HAP-1 (cell line): ENCODE measurements at regions of chr19 and their contacts with region 1.

Region 1: DNA sequence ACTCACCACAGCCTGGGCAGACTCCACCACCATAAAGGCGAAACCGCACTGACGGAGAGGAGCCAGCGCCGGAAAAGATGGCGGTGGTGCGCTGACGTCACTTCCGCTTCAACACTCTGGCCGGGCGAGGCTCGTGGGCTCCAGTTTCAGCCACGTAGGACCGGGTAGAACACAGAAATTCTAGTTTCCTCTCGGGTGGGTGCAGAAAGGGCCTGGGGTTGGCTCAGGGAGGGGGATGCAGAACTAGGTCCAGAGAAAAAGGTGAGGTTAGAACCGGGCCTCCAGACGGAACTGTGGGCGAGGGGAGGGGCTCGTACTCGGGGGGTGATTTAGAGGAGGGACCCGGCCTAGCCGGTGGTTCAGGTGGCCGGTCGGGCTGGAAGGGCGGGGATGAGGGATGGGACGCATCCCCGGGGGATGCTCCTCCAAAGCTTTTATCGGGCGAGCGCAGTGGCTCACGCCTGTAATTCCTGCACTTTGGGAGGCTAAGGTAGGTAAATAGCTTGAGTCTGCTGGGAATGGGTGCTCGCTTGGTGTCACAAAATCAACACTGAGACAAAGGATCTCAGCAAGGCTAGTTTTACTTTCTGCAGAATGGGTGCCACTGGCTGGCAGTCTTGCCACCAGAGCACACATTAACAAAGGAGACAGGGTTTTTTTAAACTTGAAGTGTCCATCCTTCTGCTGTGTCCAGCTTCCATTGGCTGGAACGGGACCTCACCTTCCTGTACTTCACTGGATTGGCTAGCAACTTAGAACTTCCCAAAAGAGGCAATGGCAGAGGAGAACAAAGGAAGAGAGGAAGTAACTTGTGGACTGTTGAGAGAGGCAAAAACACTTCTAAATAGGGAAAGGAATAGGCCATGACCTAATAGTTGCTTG is at the start of gene ZNF561:
- DNase-seq: peak; percentile 75 to 89
- H3K4me3 ChIP-seq: peak within 1 kb of the TSS; percentile 94
- H3K4me1 ChIP-seq: no peaks in the 10 kb centered on the region
- H3K27me3 ChIP-seq: no peaks in the 10 kb centered on the region

Region 2: DNA sequence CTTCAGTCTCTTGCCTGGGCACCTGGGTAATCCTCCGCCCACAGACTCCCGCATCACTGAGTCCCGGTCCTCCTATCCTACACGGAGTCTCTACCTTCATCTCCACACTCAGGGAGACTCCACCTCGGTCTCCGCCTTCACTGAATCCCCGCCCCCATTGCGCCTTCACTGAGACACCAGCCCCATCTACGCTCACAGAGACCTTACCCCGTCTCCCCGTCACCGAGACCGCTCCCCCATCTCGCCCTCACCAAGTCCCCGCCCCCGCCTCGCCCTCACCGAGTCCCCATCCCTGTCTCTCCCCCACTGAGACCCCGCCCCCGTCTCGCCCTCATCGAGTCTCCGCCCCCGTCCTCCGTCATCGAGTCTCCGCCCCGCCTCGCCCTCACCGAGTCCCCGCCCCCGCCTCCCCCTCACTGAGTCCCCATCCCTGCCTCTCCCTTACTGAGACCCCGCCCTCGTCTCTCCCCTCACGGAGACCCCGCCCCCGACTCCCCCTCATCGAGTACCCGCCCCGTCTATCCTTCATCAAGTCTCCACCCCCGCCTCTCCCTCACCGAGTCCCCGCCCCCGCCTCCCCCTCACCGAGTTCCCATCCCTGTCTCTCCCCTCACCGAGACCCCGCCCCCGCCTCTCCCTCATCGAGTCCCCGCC is 170.3 kb after region 1 on chr19:
- in situ Hi-C with region 1: loop called (anchors 5 kb)
- DNase-seq: peak; percentile 87 to 98
- H3K4me3 ChIP-seq: peak overlapping the region; percentile 43
- H3K4me1 ChIP-seq: no peaks in the 10 kb centered on the region; the same call in 1 of the 2 replicates
- H3K27me3 ChIP-seq: no peaks in the 10 kb centered on the region